ENCODE measurements at regions of chr11 and their contacts with region 1.

Region 1: DNA sequence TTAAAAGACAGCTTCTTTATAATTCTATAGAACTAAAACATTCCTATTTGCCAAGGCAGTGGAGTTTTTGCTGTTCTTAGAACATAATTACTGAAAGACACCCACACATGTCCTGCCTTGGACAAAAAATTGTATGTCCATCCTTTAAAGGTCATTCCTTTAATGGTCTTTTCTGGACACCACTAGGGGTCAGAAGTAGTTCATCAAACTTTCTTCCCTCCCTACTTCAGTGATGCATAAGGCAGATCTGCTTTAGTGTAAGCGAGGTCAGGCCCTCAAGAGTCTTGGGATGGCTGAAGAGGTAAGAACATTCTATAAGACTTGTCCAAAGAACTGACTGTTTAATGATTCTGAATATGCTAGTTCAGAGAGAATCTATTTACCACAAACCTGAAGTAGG is 4.3 kb upstream of the OR51V1 start:
- DNase-seq: peak; percentile 69
- ATAC-seq: peak; percentile 98
- H3K4me3 ChIP-seq: no peak overlapping the region
- H3K27ac ChIP-seq: no peak overlapping the region
- H3K4me1 ChIP-seq: no peaks in the 10 kb centered on the region
- H3K27me3 ChIP-seq: peaks cover 13% of the 10 kb centered on the region
- CTCF ChIP-seq: peak; percentile 75

Region 2: GRCh38 chr11:4187055-4187988 is 1017.5 kb before region 1 on chr11:
- CTCF ChIA-PET with region 1: no interaction called
- POLR2A ChIA-PET with region 1: no interaction called
- in situ Hi-C with region 1: no loop called
- intact Hi-C with region 1: loop called (anchors 10 kb)
- DNase-seq: peak; percentile 52
- ATAC-seq: peak; percentile 94
- H3K4me3 ChIP-seq: peak overlapping the region; percentile 58 to 66
- H3K27ac ChIP-seq: 0 out of 2 replicates have a peak overlapping the region, but pooled peaks have one; percentile 25
- H3K4me1 ChIP-seq: no peaks in the 10 kb centered on the region
- H3K27me3 ChIP-seq: peaks cover 6% of the 10 kb centered on the region; the same call in 1 of the 2 replicates
- CTCF ChIP-seq: peak; percentile 99

Region 3: DNA sequence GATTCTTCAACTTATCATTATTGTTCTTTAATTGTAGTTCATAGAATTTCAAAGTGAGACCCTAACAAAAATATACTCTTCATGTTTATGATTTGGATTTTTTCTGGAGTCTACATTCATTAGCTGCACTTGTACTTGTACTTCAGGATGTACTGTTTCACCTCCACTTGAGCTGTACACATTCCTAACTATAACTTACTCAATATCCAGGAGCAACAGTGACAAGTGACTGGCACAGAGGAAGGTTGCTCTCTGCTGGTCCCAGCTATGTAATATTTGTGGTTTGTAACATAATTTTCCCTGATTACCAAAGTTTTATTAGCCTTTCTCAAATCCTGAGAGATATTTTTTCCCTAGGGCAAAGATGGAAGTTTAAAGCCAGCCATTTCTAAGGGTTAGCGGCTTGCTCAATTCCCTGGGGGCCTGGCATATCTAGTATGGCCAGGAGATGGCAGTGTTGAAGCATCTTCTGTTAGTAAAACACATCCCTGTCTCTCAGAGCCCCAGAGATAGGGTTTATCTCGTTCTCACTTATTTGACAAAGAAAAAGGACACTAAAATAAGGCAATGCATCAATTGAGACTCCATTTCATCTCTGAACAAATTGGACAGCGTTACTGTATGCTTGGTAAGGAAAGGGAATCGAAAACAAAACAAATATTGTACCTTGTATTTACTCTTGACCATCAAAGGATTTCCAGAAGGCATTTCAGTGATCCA is 80.8 kb before region 1 on chr11:
- CTCF ChIA-PET with region 1: no interaction called
- POLR2A ChIA-PET with region 1: no interaction called
- in situ Hi-C with region 1: no loop called
- intact Hi-C with region 1: loop called (anchors 2 kb)
- DNase-seq: peak; percentile 66
- ATAC-seq: peak; percentile 95
- H3K4me3 ChIP-seq: no peak overlapping the region
- H3K27ac ChIP-seq: no peak overlapping the region
- H3K4me1 ChIP-seq: no peaks in the 10 kb centered on the region
- H3K27me3 ChIP-seq: no peaks in the 10 kb centered on the region
- CTCF ChIP-seq: peak; percentile 94

Region 4: GRCh38 chr11:5280582-5281102 is 75.9 kb after region 1 on chr11:
- CTCF ChIA-PET with region 1: no interaction called
- POLR2A ChIA-PET with region 1: no interaction called
- in situ Hi-C with region 1: no loop called
- intact Hi-C with region 1: no loop called
- DNase-seq: peak; percentile 100
- ATAC-seq: peak; percentile 99
- H3K4me3 ChIP-seq: no peak overlapping the region
- H3K27ac ChIP-seq: no peak overlapping the region
- H3K4me1 ChIP-seq: peaks cover 7% of the 10 kb centered on the region; the same call in 1 of the 2 replicates
- H3K27me3 ChIP-seq: no peaks in the 10 kb centered on the region
- CTCF ChIP-seq: no peak

Region 5: DNA sequence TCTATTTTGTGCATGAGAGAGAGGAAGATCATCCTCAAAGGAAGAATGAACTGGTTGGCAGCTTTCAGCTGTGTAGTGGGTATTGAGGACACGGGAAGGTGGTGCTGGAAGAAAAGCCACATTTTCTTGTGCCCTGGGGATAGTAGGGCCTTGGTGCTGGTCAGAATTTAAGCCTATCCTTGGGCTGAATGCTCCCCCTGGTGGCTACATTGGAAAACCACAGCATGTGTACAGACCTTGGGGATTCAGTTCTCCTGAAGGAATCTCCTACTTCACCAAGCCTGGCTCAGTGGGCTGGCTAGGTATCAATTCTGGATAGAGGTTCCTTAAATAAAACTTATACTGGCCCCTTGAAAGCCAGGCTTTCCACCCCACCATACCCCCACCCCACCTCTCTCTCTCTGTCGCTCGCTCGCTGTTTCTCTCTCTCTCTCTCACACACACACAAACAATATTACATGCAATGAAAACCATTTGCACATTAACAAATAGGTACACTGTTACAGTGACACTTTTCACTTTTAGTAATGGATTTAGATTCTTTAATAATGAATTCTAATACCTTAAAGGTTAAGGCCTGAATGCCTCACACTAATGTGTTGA is 176.1 kb after region 1 on chr11:
- CTCF ChIA-PET with region 1: no interaction called
- POLR2A ChIA-PET with region 1: no interaction called
- in situ Hi-C with region 1: no loop called
- intact Hi-C with region 1: loop called (anchors 2 kb)
- DNase-seq: peak; percentile 45
- ATAC-seq: peak; percentile 99
- H3K4me3 ChIP-seq: no peak overlapping the region
- H3K27ac ChIP-seq: no peak overlapping the region
- H3K4me1 ChIP-seq: no peaks in the 10 kb centered on the region
- H3K27me3 ChIP-seq: no peaks in the 10 kb centered on the region
- CTCF ChIP-seq: peak; percentile 88

Region 6: GRCh38 chr11:5891216-5891800 is 686.5 kb after region 1 on chr11:
- CTCF ChIA-PET with region 1: no interaction called
- POLR2A ChIA-PET with region 1: no interaction called
- in situ Hi-C with region 1: no loop called
- intact Hi-C with region 1: loop called (anchors 5 kb)
- DNase-seq: peak; percentile 13
- ATAC-seq: no peak
- H3K4me3 ChIP-seq: no peak overlapping the region
- H3K27ac ChIP-seq: no peak overlapping the region
- H3K4me1 ChIP-seq: no peaks in the 10 kb centered on the region
- H3K27me3 ChIP-seq: peaks cover 6% of the 10 kb centered on the region
- CTCF ChIP-seq: peak; percentile 79

Measured in Panc1 (cell line).